ENCODE measurements at regions of chr11 and their contacts with region 1.

Region 1: GRCh38 chr11:1652771-1653540 is 23.4 kb downstream of the KRTAP5-5 start:
- DNase-seq: peak; percentile 90
- ATAC-seq: peak; percentile 90

Region 2: DNA sequence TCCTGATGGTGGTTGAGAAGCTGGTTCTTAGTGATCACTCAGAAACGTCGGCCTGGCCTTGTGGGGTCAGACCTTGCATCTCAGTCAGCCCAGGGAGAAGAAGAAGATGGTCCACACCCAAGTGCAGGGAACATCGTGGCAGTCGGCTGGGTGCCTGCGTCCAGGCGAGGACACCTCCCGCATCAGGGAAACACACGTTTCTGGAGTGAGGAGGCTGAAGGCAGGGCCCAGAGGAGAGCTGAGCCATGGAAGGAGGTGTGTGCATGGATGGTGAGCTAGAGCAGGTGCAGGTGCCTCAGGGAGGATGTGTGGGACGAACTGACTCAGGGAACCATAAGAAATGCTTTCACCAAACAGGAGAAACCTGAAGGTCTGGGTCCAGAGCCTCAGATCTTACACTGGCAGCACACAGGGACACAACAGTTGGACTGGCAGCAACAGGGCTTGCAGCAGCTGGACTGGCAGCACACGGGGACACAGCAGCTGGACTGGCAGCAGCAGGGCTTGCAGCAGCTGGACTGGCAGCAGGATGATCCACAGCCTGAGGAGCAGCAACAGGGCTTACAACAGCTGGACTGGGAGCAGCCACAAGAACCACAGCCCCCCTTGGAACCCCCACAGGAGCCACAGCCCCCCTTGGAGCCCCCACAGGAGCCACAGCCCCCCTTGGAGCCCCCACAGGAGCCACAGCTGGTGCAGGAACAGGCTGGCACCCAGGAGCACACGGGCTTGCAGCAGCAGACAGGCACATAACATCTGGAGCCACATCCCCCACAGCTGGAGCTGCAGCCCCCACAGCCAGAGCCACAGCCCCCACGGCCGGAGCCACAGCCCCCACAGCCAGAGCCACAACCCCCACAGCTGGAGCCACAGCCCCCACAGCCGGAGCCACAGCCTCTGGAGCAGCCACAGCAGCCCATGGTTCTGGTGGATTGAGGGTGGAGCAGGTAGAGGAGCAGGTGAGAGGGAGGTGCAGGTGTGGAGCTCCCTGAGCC is 55.3 kb before region 1 on chr11 and contains the start of gene KRTAP5-2:
- intact Hi-C with region 1: no loop called
- DNase-seq: no peak
- ATAC-seq: no peak
- total RNA-seq, gene KRTAP5-2: not detected

Region 3: DNA sequence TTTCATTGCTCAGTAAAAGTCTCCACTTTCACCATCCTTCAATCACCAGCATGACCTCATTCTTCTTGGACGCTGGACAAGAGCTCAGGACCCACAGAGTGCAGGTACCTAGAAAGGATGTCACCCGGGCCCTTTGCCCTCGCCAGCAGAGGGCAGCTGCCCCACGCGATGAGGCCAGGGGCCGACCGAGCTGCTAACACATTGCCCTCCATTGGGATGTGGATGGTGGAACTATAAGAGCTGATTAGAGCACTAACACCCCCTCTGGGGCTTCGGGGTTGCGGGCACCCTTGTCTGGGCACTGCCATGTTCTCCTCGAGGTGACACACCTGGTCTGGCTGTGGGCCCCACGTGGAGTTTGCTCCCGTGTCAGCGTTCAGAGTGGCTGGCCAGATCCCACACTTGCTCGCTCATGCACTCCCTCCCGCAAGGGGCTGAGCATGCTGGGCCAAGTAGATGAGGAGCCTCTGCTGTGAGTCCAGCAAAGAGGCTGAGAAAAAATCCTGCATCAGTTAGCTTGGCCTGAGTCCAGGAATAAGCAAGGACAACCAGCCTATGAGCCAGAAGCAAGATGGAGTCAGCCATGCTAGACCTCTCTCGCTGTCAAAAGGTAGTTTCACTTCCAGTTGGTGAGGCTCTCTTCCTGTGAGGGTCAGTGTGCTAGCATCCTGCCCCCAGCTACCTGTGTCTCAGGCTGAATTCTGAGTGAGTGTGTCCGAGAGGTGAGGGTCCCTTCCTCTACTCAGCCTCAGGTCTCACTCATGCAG is 53.9 kb after region 1 on chr11:
- intact Hi-C with region 1: no loop called
- DNase-seq: peak; percentile 50
- ATAC-seq: no peak

Region 4: GRCh38 chr11:1832211-1832919 is 179.4 kb after region 1 on chr11:
- intact Hi-C with region 1: loop called (anchors 5 kb)
- DNase-seq: peak; percentile 82
- ATAC-seq: peak; percentile 66

Region 5: DNA sequence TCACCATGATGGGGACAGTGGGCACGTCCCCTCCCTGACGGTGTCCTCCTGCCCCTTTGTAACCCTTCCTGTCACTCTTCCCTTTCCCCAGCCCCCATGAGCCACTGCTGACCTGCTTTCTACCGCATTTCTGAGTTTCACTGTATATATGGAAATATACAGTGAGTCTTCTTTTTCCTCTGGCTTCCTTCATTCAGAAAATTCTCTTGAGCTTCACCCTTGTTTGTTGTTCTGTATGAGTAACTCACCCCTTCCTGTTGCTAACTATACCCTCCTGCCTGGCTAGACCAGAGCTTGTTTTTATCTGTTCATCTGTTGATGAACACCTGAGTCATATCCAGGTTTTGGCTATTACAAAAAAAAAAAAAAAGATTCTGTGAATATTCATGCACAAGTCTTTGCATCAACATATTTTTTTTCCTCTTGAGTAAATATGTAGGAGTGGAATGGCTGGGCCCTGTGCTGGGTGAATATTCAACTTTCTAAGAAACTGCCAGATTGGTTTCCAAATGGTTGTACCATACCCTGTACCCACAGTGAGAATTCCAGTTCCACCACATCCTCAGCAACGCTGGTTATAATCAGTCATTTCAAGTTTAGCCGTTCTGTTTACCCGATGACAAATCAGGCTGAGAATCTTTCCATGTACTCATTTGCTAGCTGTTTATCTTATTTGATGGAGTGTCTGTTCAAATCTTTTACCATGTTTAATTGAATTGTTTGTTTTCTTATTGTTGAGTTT is 424.3 kb after region 1 on chr11:
- intact Hi-C with region 1: no loop called
- DNase-seq: no peak
- ATAC-seq: no peak

Measured in sciatic nerve (tissue), 2 donors.